ENCODE measurements at regions of chr2 and their contacts with region 1.

Region 1: DNA sequence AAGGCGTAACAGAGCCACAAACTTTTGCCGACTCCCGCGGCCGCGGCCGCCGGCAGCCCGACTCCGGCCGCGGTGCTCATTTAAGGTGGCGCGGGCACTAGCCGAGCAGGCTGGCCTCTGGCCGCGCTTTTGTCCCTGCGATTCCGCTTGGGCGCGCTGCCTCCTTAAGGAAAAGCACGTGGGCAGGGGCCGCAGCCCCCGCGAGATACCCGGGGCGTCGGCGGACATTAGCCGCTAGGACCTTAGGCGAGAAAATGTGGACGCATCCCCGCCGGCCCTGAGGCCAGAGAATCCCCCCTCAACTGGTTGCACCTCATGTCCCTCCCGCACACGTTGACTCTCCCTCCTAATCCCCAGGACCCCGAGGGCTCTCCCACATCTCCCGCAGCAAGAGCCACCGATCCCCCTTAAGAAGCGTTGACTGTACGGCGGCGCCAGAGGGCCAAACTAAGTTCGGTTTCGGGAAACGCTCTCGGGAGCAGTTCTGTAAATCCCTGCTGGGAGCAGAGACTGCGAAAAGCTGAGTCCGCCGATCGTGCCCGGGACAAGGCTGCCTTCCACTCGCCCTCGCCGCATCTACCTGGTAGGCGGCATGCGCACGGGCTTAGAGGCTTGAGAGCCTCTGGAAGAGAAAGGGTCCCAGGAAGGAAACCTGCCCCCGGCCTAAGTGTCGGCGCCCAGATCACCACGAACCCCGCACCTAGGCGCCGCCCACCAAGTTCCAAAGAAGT is 1.7 kb upstream of the SATB2 start:
- DNase-seq: peak; percentile 88 to 99 (median 94)

Region 2: GRCh38 chr2:198374375-198375082 is 1084.9 kb before region 1 on chr2:
- intact Hi-C with region 1: loop called (anchors 5 kb)
- DNase-seq: peak in 6 of 10 donors; percentile 23 to 55 (median 38)

Region 3: DNA sequence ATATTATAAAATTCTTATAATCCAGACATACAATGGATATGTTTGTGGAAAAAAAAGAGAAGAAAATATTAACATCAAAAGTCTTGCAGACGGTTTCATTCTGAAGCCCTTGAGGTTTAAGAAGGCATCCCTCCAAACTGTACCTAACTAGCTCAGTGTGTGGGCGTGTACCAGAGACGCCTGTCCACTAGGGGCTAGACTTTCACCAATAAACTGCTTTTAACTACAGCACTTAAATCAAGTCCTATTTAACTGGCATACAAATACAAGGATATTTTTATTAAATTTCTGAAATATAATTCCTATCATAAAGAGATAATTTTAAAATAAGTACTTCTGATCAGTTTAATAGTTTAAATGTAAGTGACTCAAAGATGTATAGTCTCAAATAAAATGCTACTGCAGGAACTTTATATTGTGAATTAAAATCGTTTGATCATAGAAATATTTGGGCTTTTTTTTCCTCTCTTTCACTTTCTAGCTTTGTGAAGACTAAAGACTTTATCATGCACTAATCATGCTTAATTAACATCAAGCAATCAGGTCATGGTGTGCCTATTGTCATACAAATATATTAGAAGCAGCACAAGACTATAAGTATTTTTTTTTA is 439.4 kb before region 1 on chr2:
- intact Hi-C with region 1: loop called (anchors 5 kb)
- DNase-seq: peak in 1 of 10 donors; percentile 29